ENCODE measurements at regions of chr7 and their contacts with region 1.

Region 1: GRCh38 chr7:150898475-150899011 is 46.2 kb downstream of the AOC1 start:
- DNase-seq: peak; percentile 61 to 80 (median 66)
- H3K4me3 ChIP-seq: no peak overlapping the region
- H3K4me3 Mint-ChIP-seq: peak overlapping the region in 4 of 7 donors; percentile 12 to 75 (median 30)
- H3K27ac ChIP-seq: no peak overlapping the region
- H3K27ac Mint-ChIP-seq: peak overlapping the region in 2 of 8 donors; percentile 4 to 60
- H3K4me1 ChIP-seq: peaks cover 8% of the 10 kb centered on the region
- H3K4me1 Mint-ChIP-seq: peaks cover 5 to 15% (median 8%) of the 10 kb centered on the region in 3 donors
- H3K27me3 ChIP-seq: peaks cover 13% of the 10 kb centered on the region
- H3K27me3 Mint-ChIP-seq: peaks cover 34 to 79% of the 10 kb centered on the region in 2 donors

Region 2: DNA sequence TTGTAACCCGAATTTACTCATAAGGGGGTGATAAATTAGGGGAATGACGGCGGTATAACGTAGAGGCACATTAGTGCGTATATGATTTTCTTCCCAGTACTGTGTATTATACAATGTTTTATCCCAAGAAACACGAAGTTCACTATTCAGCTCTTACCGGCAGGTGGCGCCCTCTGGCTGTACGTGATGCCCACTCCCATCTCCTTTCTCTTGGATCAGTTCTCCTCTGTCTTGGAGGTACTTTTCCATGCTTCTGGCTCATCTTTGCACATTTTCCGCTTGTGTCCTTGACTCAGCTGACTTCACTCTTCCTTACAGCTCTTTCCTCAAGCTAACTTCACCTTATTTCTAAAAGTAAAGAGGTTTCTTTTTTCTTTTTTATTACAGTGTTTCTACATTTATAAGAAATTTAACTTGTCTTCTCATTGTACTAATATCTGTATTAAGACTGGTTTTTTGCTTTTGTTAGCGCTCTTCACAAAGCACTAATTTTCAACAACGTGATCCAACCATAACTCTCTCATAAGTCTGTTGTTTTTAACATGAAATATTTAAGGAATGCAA is 119.7 kb before region 1 on chr7:
- CTCF ChIA-PET with region 1: no interaction called
- POLR2A ChIA-PET with region 1: no interaction called
- DNase-seq: peak; percentile 50 to 77 (median 58)
- H3K4me3 ChIP-seq: no peak overlapping the region
- H3K4me3 Mint-ChIP-seq: no peak overlapping the region
- H3K27ac ChIP-seq: no peak overlapping the region
- H3K27ac Mint-ChIP-seq: no peak overlapping the region
- H3K4me1 ChIP-seq: peaks cover 5% of the 10 kb centered on the region
- H3K4me1 Mint-ChIP-seq: peaks cover 4 to 11% (median 5%) of the 10 kb centered on the region in 3 donors
- H3K27me3 ChIP-seq: peaks cover 4% of the 10 kb centered on the region
- H3K27me3 Mint-ChIP-seq: peaks cover 1 to 14% of the 10 kb centered on the region in 2 donors

Region 3: DNA sequence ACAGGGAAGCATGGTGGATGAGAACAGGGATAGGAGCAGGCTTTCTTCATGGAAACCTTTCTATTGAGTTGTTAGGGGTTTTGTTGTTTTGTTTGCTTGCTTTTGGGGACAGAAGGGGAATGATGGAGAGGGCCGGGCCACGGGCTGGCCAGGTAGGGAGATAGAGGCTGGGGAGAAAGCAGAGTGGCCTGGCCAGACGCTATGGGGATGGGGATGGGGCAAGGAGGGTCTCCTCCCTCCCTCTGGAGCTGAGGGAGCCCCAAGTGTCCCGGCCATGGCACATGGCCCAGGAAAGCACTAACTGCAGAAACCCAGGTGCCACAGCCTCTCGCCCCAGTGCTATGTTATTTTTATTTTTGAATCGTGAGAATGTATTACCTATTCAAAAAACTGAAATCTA is 36.2 kb before region 1 on chr7:
- CTCF ChIA-PET with region 1: no interaction called
- POLR2A ChIA-PET with region 1: no interaction called
- DNase-seq: no peak
- H3K4me3 ChIP-seq: no peak overlapping the region
- H3K4me3 Mint-ChIP-seq: no peak overlapping the region
- H3K27ac ChIP-seq: no peak overlapping the region
- H3K27ac Mint-ChIP-seq: no peak overlapping the region
- H3K4me1 ChIP-seq: no peaks in the 10 kb centered on the region
- H3K4me1 Mint-ChIP-seq: peaks cover 0 to 3% (median 0%) of the 10 kb centered on the region in 3 donors
- H3K27me3 ChIP-seq: no peaks in the 10 kb centered on the region
- H3K27me3 Mint-ChIP-seq: peaks cover 9 to 54% of the 10 kb centered on the region in 2 donors

Region 4: GRCh38 chr7:150909200-150909995 is 10.9 kb after region 1 on chr7:
- CTCF ChIA-PET with region 1: interaction called, 25 read pairs
- POLR2A ChIA-PET with region 1: no interaction called
- DNase-seq: peak; percentile 22 to 66 (median 51)
- H3K4me3 ChIP-seq: no peak overlapping the region
- H3K4me3 Mint-ChIP-seq: peak overlapping the region in 6 of 7 donors; percentile 27 to 76 (median 58)
- H3K27ac ChIP-seq: no peak overlapping the region
- H3K27ac Mint-ChIP-seq: peak overlapping the region in 3 of 8 donors; percentile 34 to 71 (median 51)
- H3K4me1 ChIP-seq: peaks cover 10% of the 10 kb centered on the region
- H3K4me1 Mint-ChIP-seq: peaks cover 9 to 18% (median 12%) of the 10 kb centered on the region in 3 donors
- H3K27me3 ChIP-seq: no peaks in the 10 kb centered on the region
- H3K27me3 Mint-ChIP-seq: peaks cover 6 to 13% of the 10 kb centered on the region in 2 donors

Region 5: GRCh38 chr7:150937848-150938561 is 39.5 kb after region 1 on chr7:
- CTCF ChIA-PET with region 1: interaction called, 16 read pairs
- POLR2A ChIA-PET with region 1: no interaction called
- DNase-seq: peak in 1 of 5 donors; percentile 24
- H3K4me3 ChIP-seq: peak overlapping the region; percentile 13
- H3K4me3 Mint-ChIP-seq: peak overlapping the region in 6 of 7 donors; percentile 50 to 80 (median 74)
- H3K27ac ChIP-seq: no peak overlapping the region
- H3K27ac Mint-ChIP-seq: peak overlapping the region in 6 of 8 donors; percentile 7 to 76 (median 58)
- H3K4me1 ChIP-seq: peaks cover 44% of the 10 kb centered on the region
- H3K4me1 Mint-ChIP-seq: peaks cover 27 to 42% (median 30%) of the 10 kb centered on the region in 3 donors
- H3K27me3 ChIP-seq: no peaks in the 10 kb centered on the region
- H3K27me3 Mint-ChIP-seq: no peaks in the 10 kb centered on the region

Region 6: DNA sequence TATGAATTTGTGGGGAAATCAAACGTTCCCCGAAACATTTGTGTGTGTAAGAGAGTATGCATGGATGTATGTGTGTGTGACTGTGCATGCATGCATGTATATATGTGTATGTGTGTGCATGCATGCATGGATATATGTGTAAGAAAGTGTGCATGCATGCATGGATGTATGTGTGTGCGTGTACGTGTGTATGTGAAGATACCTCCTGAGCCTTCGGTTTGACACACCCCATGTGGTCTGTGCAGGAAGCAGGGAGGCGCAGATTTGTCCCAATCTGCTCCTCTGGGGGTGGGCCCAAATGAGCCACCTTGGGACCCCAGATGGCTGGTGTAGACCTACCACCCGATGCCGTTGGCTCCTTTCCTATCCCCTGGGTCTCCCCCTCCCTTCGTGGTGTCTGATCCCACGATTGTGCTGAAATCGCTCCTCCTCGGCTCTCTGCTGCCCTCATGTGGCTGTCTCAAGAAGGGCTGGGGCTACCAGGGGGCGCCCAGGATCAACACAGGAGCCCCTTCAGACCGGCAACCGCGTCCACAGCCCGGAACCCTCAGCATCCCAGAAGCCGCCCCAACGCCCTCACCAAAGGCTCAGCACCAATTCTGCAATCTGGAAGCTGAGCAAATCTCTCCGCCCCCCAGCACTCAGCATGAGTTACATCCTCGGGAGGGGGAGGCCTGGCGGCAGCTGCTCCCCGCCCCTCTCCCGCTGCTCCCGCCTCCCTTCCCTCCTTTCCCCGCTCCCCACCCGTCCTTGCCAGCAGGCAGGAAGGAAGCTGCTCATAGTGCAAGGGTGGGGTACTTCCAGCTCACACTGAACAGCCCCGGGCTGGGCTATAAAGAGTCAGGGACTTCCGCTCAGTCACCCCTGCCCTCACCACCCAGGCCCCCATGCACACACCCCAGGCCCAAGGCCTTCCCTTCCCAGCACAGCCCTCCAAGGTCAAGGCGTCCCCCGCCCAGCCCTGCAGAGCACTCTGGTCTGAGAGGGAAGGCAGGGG is 90.0 kb after region 1 on chr7:
- CTCF ChIA-PET with region 1: interaction called, 29 read pairs
- POLR2A ChIA-PET with region 1: no interaction called
- DNase-seq: peak; percentile 54 to 75 (median 62)
- H3K4me3 ChIP-seq: peak overlapping the region; percentile 38
- H3K4me3 Mint-ChIP-seq: peak overlapping the region in 5 of 7 donors; percentile 15 to 65 (median 54)
- H3K27ac ChIP-seq: no peak overlapping the region
- H3K27ac Mint-ChIP-seq: peak overlapping the region in 2 of 8 donors; percentile 29 to 64
- H3K4me1 ChIP-seq: peaks cover 17% of the 10 kb centered on the region
- H3K4me1 Mint-ChIP-seq: peaks cover 12 to 24% (median 15%) of the 10 kb centered on the region in 3 donors
- H3K27me3 ChIP-seq: no peaks in the 10 kb centered on the region
- H3K27me3 Mint-ChIP-seq: peaks cover 18 to 31% of the 10 kb centered on the region in 2 donors

Region 7: DNA sequence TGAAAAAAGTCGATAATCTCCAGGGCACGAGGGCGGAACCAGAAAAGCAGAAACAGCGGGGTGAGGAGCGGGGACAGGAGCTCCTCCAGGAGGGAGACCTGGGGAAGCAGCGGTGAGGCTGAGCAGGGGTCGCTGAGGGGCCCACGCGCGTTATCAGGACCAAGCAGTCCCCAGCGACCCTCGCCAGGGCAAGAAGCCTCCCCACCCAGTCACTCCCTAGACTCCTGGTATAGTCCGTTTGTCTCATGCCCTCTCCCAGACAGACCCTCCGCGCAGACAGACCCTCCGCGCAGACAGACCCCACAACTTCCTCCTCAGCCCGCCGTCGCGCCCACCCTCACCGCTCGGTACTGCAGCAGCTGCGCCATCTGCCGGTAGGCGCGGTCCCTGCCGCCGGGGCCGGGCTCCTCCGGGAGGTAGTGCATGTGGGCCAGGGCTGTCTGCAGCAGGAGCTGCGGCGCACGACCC is 119.4 kb after region 1 on chr7:
- CTCF ChIA-PET with region 1: interaction called, 12 read pairs
- POLR2A ChIA-PET with region 1: no interaction called
- DNase-seq: peak; percentile 72 to 86 (median 73)
- H3K4me3 ChIP-seq: peak overlapping the region; percentile 67
- H3K4me3 Mint-ChIP-seq: peak overlapping the region; percentile 80 to 93 (median 85)
- H3K27ac ChIP-seq: no peak overlapping the region
- H3K27ac Mint-ChIP-seq: peak overlapping the region; percentile 66 to 96 (median 90)
- H3K4me1 ChIP-seq: peaks cover 58% of the 10 kb centered on the region
- H3K4me1 Mint-ChIP-seq: peaks cover 39 to 61% (median 46%) of the 10 kb centered on the region in 3 donors
- H3K27me3 ChIP-seq: no peaks in the 10 kb centered on the region
- H3K27me3 Mint-ChIP-seq: peaks cover 15 to 22% of the 10 kb centered on the region in 2 donors

Measured in CD8-positive, alpha-beta memory T cell (primary cell).